H1 (cell line): ENCODE measurements at regions of chr13 and their contacts with region 1.

Region 1: DNA sequence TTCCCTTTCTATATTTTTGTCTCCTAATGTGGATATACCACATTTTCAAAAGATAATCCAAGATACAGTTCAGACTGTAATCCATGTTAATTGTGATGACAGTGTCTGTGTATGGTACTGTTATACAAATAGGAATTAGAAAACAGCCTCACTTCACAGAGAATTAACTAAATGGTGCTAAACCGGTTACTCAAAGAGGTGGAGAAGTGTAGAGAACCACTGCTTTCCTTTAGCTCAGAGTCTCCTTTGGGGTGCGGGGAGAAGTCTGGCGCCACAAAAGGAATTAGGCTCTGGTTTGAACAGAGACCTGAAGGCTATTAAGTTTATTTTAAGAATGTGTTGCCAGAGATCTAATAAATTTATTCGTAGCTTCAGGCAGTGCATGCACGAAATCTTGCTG is 65.8 kb downstream of the FREM2 start:
- DNase-seq: no peak
- H3K4me3 ChIP-seq: no peak overlapping the region
- H3K27ac ChIP-seq: no peak overlapping the region
- H3K4me1 ChIP-seq: peaks cover 0 to 13% (median 6%) of the 10 kb centered on the region in 4 experiments; a peak in 3 of 7 replicates
- H3K27me3 ChIP-seq: no peaks in the 10 kb centered on the region
- CTCF ChIP-seq: no peak
- EP300 ChIP-seq: no peak
- POLR2A ChIP-seq: no peak
- RAD21 ChIP-seq: no peak

Region 2: DNA sequence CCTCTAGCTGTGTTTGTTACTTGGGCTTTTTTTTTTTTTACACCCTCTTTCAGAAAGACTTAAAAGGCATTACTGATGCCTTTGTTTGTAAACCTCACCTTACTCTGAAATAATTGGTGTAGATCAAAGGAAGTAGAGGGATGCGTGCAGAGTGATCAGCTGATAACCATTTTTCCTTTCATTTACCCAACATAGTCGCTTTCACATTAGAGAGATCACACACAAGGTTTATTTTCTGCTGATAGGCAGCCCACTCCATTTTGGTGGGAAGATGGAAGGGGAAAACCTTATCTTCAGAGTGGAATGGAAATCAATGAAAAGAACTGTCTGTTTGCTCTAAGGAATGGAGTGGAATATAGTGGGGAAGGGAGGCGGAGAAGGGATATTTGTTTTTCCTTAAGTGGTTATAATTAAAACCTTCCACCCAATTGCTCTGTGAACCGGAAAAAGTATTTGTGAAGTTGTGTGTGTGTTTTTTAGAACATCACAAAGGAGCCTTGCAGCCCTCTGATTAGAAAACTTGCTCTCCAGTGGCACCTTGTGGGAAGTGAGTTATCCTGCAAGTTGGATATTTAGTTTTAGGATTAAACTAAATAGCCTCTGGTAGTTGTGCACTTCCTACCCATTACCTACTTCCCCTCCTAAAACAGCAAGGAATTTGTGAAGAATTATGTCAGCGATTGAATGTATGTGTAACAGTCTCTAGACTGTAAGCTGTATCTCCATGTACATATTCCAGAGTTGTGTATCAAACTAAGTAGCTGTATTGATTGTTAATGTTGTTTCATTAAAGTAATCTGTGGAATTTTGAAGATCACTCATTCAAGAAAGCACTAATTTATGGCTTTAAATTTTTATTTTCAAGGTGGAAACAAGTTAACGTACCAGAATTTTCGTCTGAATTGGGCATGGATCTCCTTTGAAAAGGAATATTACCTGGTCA is 11.1 kb after region 1 on chr13:
- CTCF ChIA-PET with region 1: interaction called, 17 read pairs
- POLR2A ChIA-PET with region 1: interaction called, 5 read pairs
- DNase-seq: peak in 1 of 2 experiments; percentile 19
- H3K4me3 ChIP-seq: peak overlapping the region in 1 of 4 experiments; percentile 14; a peak in 1 of 8 replicates
- H3K27ac ChIP-seq: 0 out of 2 replicates have a peak overlapping the region, but pooled peaks have one; percentile 39
- H3K4me1 ChIP-seq: peaks cover 0 to 5% (median 0%) of the 10 kb centered on the region in 4 experiments; a peak in 2 of 7 replicates
- H3K27me3 ChIP-seq: no peaks in the 10 kb centered on the region
- CTCF ChIP-seq: peak in 2 of 3 experiments; percentile 64 to 70; a peak in 3 of 4 replicates
- EP300 ChIP-seq: no peak
- POLR2A ChIP-seq: no peak
- RAD21 ChIP-seq: peak; percentile 84 to 85

Region 3: GRCh38 chr13:38775085-38775484 is 22.4 kb after region 1 on chr13:
- CTCF ChIA-PET with region 1: no interaction called
- POLR2A ChIA-PET with region 1: no interaction called
- DNase-seq: no peak
- H3K4me3 ChIP-seq: no peak overlapping the region
- H3K27ac ChIP-seq: no peak overlapping the region
- H3K4me1 ChIP-seq: peaks cover 0 to 5% (median 0%) of the 10 kb centered on the region in 4 experiments; a peak in 2 of 7 replicates
- H3K27me3 ChIP-seq: no peaks in the 10 kb centered on the region
- CTCF ChIP-seq: no peak
- EP300 ChIP-seq: no peak
- POLR2A ChIP-seq: no peak
- RAD21 ChIP-seq: no peak

Region 4: GRCh38 chr13:38933777-38934176 is 181.1 kb after region 1 on chr13:
- CTCF ChIA-PET with region 1: no interaction called
- POLR2A ChIA-PET with region 1: no interaction called
- DNase-seq: no peak
- H3K4me3 ChIP-seq: no peak overlapping the region
- H3K27ac ChIP-seq: no peak overlapping the region
- H3K4me1 ChIP-seq: no peaks in the 10 kb centered on the region
- H3K27me3 ChIP-seq: no peaks in the 10 kb centered on the region
- CTCF ChIP-seq: no peak
- EP300 ChIP-seq: no peak
- POLR2A ChIP-seq: no peak
- RAD21 ChIP-seq: no peak